ENCODE measurements at regions of chr18 and their contacts with region 1.

Region 1: GRCh38 chr18:46547520-46547919 is 109.5 kb downstream of the LOXHD1 start:
- DNase-seq: no peak
- H3K4me3 ChIP-seq: no peak overlapping the region
- H3K27ac ChIP-seq: no peak overlapping the region
- H3K4me1 ChIP-seq: no peaks in the 10 kb centered on the region
- H3K27me3 ChIP-seq: no peaks in the 10 kb centered on the region
- CTCF ChIP-seq: no peak
- POLR2A ChIP-seq: no peak

Region 2: GRCh38 chr18:46531482-46531881 is 16.0 kb before region 1 on chr18:
- intact Hi-C with region 1: loop called (anchors 1 kb)
- DNase-seq: no peak
- H3K4me3 ChIP-seq: no peak overlapping the region
- H3K27ac ChIP-seq: no peak overlapping the region
- H3K4me1 ChIP-seq: no peaks in the 10 kb centered on the region
- H3K27me3 ChIP-seq: no peaks in the 10 kb centered on the region
- CTCF ChIP-seq: no peak
- POLR2A ChIP-seq: no peak

Region 3: GRCh38 chr18:47067648-47068047 is 520.1 kb after region 1 on chr18:
- intact Hi-C with region 1: no loop called
- DNase-seq: no peak
- H3K4me3 ChIP-seq: no peak overlapping the region
- H3K27ac ChIP-seq: no peak overlapping the region
- H3K4me1 ChIP-seq: no peaks in the 10 kb centered on the region
- H3K27me3 ChIP-seq: no peaks in the 10 kb centered on the region
- CTCF ChIP-seq: no peak
- POLR2A ChIP-seq: no peak